Spleen (tissue), 13 donors: ENCODE measurements at regions of chr2 and their contacts with region 1.

Region 1: GRCh38 chr2:111116843-111117597 is 3.7 kb upstream of the BCL2L11 start:
- DNase-seq: peak; percentile 92
- H3K4me3 ChIP-seq: peak overlapping the region; percentile 24 to 90 (median 81)
- H3K27ac ChIP-seq: no peak overlapping the region
- H3K4me1 ChIP-seq: peaks cover 35 to 55% (median 47%) of the 10 kb centered on the region in 6 donors
- H3K27me3 ChIP-seq: peaks cover 7 to 81% (median 56%) of the 10 kb centered on the region in 7 donors
- CTCF ChIP-seq: peak; percentile 56 to 87 (median 77)
- POLR2A ChIP-seq: no peak

Region 2: DNA sequence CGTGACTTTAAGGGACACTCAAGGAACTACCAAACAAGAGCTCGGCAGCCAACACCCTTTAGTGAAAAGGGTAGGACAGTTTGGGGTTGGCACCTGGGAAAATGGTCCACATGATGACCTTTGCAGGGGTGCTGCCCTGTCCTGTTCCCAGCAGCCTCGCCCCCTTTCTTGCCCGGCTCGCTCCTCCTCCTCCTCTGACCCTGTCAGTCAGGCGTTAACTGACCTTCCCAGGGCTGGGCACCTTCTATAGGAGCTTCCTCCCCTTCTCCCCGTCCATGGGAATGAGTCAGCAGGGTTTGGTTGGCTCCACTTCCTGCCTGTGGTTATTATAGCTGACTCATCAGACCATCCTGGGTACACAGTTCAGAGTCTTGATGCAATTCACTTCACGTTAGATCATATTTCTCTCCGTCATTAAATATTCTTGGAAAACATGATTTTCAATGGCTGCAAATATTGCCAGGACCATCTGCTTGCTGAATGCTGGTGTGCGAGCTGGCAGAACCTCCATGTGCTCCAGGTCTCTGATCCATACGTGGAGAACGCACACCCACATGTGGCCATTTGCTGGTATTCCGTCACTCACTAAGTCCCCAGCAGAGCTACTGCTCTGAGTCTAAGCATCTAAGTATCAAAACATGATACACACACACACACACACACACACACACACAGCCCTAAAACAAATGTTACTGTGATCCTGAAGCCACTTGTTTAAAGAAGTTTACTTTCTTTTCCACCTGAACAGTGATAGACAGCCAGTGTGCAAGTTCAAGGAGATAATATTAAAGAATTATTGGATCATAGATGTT is 581.9 kb after region 1 on chr2:
- intact Hi-C with region 1: loop called (anchors 10 kb)
- DNase-seq: peak; percentile 85
- H3K4me3 ChIP-seq: peak overlapping the region in 1 of 8 donors; percentile 33
- H3K27ac ChIP-seq: peak overlapping the region in 7 of 8 donors; percentile 36 to 90 (median 76)
- H3K4me1 ChIP-seq: peaks cover 11 to 54% (median 32%) of the 10 kb centered on the region in 6 donors
- H3K27me3 ChIP-seq: no peaks in the 10 kb centered on the region
- CTCF ChIP-seq: peak in 3 of 11 experiments; percentile 4 to 26 (median 12)
- POLR2A ChIP-seq: no peak

Region 3: DNA sequence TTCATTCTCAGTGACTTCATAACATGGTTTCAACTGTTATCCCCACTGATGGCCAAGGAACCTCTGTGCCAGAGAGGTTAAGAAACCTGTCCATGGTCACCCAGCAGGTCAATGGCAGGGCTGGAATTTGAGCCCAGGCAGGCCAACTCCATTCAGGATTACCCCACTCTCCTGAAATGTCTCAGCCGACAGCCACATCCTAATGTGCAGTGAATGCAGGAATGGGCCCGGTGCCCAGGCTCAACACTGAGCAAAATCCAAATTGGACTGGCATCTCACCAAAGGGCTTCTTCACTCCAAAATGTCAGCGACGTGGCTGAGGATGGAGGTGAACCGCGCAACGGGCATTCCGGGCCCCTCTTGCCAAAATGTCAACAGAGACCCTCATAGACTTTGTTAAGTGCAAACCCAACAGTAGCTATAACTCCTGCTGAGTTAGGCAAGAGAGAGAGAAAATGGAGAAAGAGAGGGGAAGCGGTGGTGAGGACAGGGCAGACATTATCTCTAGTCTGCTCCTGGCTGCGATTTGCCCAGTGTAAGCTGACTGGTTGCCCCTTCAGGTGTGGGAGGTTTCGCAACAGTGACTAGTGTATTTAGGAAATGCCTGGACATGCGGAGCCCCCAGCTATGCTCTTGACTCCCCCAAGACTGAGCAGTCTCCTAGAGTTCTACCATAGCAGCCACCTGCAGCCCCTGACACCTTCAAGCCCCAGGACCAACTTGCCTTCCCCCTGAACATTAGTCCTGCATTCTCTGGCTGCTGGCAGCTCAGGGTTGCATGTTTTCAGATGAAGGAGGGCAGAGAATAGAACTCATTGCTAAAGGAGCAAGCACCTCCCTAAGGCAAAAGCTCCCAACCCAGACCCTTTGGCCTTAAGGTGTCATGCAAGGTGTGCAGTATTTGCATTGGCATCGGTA is 599.2 kb after region 1 on chr2:
- intact Hi-C with region 1: no loop called
- DNase-seq: peak; percentile 29
- H3K4me3 ChIP-seq: no peak overlapping the region
- H3K27ac ChIP-seq: no peak overlapping the region
- H3K4me1 ChIP-seq: no peaks in the 10 kb centered on the region
- H3K27me3 ChIP-seq: no peaks in the 10 kb centered on the region
- CTCF ChIP-seq: no peak
- POLR2A ChIP-seq: no peak